ENCODE measurements at regions of chr11 and their contacts with region 1.

Region 1: DNA sequence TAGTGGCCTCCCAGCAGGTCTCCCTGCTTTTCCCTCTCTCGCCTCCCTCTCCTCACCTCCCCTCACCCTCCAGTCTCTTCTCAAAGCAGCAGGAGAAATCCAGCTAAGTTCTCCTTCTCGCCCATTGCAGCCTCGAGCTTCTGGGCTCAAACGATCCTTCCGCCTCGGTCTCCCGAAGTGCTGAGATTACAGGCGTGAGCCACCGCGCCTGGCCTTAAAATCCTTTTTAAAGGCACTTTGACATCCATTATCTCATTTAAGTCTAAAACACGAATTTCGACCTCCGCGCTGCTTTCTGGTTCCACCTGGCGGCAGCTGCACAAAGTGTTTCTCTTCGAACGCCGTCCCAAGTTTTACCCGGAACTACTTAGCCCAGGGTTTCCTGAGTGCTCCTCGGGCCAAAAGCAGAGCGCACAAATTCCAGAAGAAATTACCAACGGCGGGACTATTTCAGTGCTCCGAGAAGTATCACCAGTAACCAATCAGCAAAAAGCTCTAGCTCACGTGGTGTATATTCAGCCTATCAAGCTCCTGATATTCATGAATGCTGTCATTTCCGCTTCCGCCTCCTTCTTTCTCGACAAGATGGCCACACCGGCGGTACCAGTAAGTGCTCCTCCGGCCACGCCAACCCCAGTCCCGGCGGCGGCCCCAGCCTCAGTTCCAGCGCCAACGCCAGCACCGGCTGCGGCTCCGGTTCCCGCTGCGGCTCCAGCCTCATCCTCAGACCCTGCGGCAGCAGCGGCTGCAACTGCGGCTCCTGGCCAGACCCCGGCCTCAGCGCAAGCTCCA is at the start of gene EIF3F:
- DNase-seq: peak; percentile 93
- H3K4me3 Mint-ChIP-seq: peak within 1 kb of the TSS; percentile 83
- H3K27ac Mint-ChIP-seq: peak within 1 kb of the TSS; percentile 89
- H3K4me1 Mint-ChIP-seq: peaks cover 38% of the 10 kb centered on the region
- H3K27me3 Mint-ChIP-seq: no peaks in the 10 kb centered on the region

Region 2: GRCh38 chr11:7892840-7893254 is 94.1 kb before region 1 on chr11:
- CTCF ChIA-PET with region 1: interaction called, 30 read pairs
- DNase-seq: no peak
- H3K4me3 Mint-ChIP-seq: no peak overlapping the region
- H3K27ac Mint-ChIP-seq: no peak overlapping the region
- H3K4me1 Mint-ChIP-seq: no peaks in the 10 kb centered on the region
- H3K27me3 Mint-ChIP-seq: peaks cover 9% of the 10 kb centered on the region

Measured in activated naive CD4-positive, alpha-beta T cell treated with anti-CD3 and anti-CD28 coated beads, Interleukin-2, amount 10 ng/mL, durations not matched to agents 7 days and 5 days (primary cell).